MCF 10A (cell line): ENCODE measurements at regions of chr15 and their contacts with region 1.

Region 1: GRCh38 chr15:88246666-88247446 is 9.7 kb downstream of the NTRK3 start:
- DNase-seq: peak; percentile 62
- H3K4me3 Mint-ChIP-seq: no peak overlapping the region
- H3K27ac Mint-ChIP-seq: no peak overlapping the region
- H3K4me1 Mint-ChIP-seq: peaks cover 5% of the 10 kb centered on the region
- H3K27me3 Mint-ChIP-seq: no peaks in the 10 kb centered on the region
- CTCF ChIP-seq: peak; percentile 81

Region 2: DNA sequence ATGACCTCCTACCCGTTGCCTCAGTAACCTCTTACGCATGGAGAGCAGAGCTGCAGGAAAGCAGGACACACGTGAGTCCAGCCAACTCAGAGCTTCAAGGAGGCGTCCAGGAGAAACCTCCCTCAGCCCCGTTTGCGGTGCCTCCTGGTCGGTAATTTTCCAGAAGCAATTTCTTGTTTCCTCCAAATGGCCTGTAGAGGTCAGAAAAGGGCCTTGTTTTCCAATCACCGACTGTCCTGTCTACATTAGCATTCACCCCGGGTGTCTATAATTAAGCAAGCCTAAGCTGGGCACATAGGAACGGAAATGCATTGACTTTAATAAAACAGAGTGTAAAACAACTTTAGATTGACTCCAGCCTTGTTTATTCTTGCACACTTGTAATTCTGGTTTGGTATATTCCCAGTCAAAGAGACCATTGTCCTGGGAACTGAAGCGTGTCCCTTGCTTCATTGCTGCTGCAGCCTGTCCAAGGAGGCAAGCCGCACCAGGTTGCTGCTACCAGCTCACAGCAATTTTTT is 1331.0 kb before region 1 on chr15:
- CTCF ChIA-PET with region 1: interaction called, 31 read pairs
- POLR2A ChIA-PET with region 1: no interaction called
- intact Hi-C with region 1: loop called (anchors 1 kb)
- DNase-seq: peak; percentile 42
- H3K4me3 Mint-ChIP-seq: no peak overlapping the region
- H3K27ac Mint-ChIP-seq: no peak overlapping the region
- H3K4me1 Mint-ChIP-seq: no peaks in the 10 kb centered on the region
- H3K27me3 Mint-ChIP-seq: no peaks in the 10 kb centered on the region
- CTCF ChIP-seq: peak; percentile 51

Region 3: GRCh38 chr15:87604857-87605446 is 641.9 kb before region 1 on chr15:
- CTCF ChIA-PET with region 1: no interaction called
- POLR2A ChIA-PET with region 1: no interaction called
- intact Hi-C with region 1: loop called (anchors 10 kb)
- DNase-seq: peak; percentile 19
- H3K4me3 Mint-ChIP-seq: no peak overlapping the region
- H3K27ac Mint-ChIP-seq: no peak overlapping the region
- H3K4me1 Mint-ChIP-seq: peaks cover 12% of the 10 kb centered on the region
- H3K27me3 Mint-ChIP-seq: no peaks in the 10 kb centered on the region
- CTCF ChIP-seq: peak; percentile 60

Region 4: DNA sequence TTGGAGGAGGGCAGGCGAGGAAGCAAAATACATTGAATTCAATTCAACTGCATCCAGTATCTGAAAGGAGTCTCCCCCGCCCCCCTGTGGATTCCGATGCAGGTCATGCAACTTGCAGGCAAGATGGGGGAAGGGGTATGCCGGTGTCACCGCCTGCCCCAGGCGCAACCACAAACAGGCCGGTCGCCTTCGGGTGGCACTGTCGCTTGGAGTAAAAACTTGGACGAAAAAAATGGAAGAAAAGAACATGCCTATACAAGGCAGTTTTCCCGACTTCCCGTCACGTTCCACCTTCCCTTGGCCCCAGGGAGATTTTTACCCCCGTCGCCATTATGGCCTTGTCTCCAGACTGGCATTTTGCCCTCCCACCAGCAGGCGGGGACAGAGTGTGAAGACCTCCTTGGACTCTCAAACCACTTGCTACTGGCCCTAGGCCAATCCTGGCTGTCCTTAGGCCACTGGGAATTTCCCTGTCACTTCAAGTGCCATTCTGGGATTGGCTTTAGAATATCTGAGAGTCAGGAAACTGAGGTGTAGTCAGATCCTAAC is 11.3 kb after region 1 on chr15:
- CTCF ChIA-PET with region 1: interaction called, 42 read pairs
- POLR2A ChIA-PET with region 1: no interaction called
- intact Hi-C with region 1: no loop called
- DNase-seq: no peak
- H3K4me3 Mint-ChIP-seq: no peak overlapping the region
- H3K27ac Mint-ChIP-seq: no peak overlapping the region
- H3K4me1 Mint-ChIP-seq: no peaks in the 10 kb centered on the region
- H3K27me3 Mint-ChIP-seq: peaks cover 54% of the 10 kb centered on the region
- CTCF ChIP-seq: no peak

Region 5: GRCh38 chr15:88284318-88284998 is 37.6 kb after region 1 on chr15:
- CTCF ChIA-PET with region 1: interaction called, 14 read pairs
- POLR2A ChIA-PET with region 1: no interaction called
- intact Hi-C with region 1: no loop called
- DNase-seq: no peak
- H3K4me3 Mint-ChIP-seq: no peak overlapping the region
- H3K27ac Mint-ChIP-seq: no peak overlapping the region
- H3K4me1 Mint-ChIP-seq: no peaks in the 10 kb centered on the region
- H3K27me3 Mint-ChIP-seq: no peaks in the 10 kb centered on the region
- CTCF ChIP-seq: no peak